ENCODE measurements at regions of chr2 and their contacts with region 1.

Region 1: GRCh38 chr2:110167326-110168000 is 37.4 kb downstream of the NPHP1 start:
- DNase-seq: no peak
- CTCF ChIP-seq: no peak

Region 2: GRCh38 chr2:110157153-110157793 is 10.2 kb before region 1 on chr2:
- CTCF ChIA-PET with region 1: interaction called, 54 read pairs
- POLR2A ChIA-PET with region 1: no interaction called
- DNase-seq: peak; percentile 50
- CTCF ChIP-seq: peak; percentile 86

Region 3: DNA sequence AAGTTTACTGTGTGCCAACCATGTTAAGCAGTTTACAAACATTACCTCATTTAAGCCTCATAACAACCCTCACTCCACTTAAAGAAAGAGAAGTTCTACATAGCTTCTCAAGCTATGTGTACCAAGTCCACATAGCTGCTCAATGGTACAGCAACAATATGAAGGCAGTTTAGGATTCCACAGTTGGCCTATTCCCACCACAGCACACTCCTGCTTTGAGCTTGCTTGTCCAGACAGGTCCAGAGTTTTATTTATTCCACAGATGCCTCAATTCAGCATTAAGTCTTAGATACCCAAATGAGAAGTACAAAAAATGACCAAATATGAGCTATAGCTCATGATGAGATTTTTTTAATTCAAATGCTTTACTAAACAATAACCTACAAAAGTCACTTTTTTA is 12.6 kb after region 1 on chr2:
- CTCF ChIA-PET with region 1: interaction called, 10 read pairs
- POLR2A ChIA-PET with region 1: no interaction called
- DNase-seq: no peak
- CTCF ChIP-seq: no peak

Region 4: GRCh38 chr2:110204780-110205385 is 37.4 kb after region 1 on chr2 and contains the start of gene NPHP1:
- CTCF ChIA-PET with region 1: no interaction called
- POLR2A ChIA-PET with region 1: no interaction called
- DNase-seq: peak; percentile 95
- CTCF ChIP-seq: no peak

Measured in GM10248 (cell line).